ENCODE measurements at regions of chr7 and their contacts with region 1.

Region 1: GRCh38 chr7:111301891-111302290 is 211.0 kb downstream of the LRRN3 start:
- DNase-seq: no peak
- ATAC-seq: no peak
- H3K4me3 ChIP-seq: no peak overlapping the region
- H3K4me3 Mint-ChIP-seq: no peak overlapping the region
- H3K27ac ChIP-seq: no peak overlapping the region
- H3K27ac Mint-ChIP-seq: no peak overlapping the region
- H3K4me1 ChIP-seq: no peaks in the 10 kb centered on the region
- H3K4me1 Mint-ChIP-seq: peaks cover 3% of the 10 kb centered on the region
- H3K27me3 ChIP-seq: no peaks in the 10 kb centered on the region
- H3K27me3 Mint-ChIP-seq: no peaks in the 10 kb centered on the region
- CTCF ChIP-seq: no peak

Region 2: DNA sequence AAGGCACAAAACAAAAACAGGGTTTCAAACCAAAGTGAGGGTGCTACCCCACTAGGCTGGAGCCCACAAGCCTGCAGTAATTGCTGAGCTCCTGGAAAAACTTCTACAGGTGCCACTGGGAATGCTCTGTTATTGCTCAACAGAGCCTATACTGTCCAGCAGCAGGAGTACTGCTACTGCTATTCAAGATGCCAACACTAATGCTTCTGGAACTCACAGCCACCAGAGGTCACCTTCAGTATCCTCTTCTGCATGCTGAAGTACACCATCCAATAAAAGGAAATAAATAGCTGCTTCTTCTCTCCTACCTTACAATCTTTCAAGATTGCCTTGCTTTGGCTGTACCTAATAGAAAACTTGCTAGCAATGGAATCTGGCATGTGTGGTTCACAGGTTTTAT is 11.1 kb after region 1 on chr7:
- CTCF ChIA-PET with region 1: no interaction called
- POLR2A ChIA-PET with region 1: interaction called, 11 read pairs
- intact Hi-C with region 1: no loop called
- DNase-seq: no peak
- ATAC-seq: no peak
- H3K4me3 ChIP-seq: no peak overlapping the region
- H3K4me3 Mint-ChIP-seq: no peak overlapping the region
- H3K27ac ChIP-seq: no peak overlapping the region
- H3K27ac Mint-ChIP-seq: no peak overlapping the region
- H3K4me1 ChIP-seq: no peaks in the 10 kb centered on the region
- H3K4me1 Mint-ChIP-seq: no peaks in the 10 kb centered on the region
- H3K27me3 ChIP-seq: no peaks in the 10 kb centered on the region
- H3K27me3 Mint-ChIP-seq: no peaks in the 10 kb centered on the region
- CTCF ChIP-seq: no peak

Measured in B cell (primary cell).